H1 (cell line): ENCODE measurements at regions of chr14 and their contacts with region 1.

Region 1: DNA sequence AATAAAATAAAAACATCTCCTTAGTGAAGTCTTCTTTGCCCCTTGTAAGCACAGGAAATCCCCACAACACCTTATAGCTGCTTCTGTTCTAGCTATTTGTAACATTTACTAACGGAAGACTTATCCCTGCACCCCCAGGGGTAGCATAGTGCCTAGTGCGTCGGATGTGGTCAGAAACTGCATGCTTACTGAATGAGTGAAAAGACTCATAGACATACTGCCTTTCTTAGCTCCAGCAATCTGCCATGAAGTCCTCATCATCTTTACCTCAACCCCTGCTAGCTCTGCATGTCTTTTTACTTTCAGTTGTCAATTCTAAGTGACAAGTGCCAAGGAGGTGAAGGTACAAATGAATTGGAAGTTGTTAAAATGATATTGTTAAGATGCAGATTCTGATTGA is 12.9 kb downstream of the RIOX1 start:
- DNase-seq: no peak
- H3K4me3 ChIP-seq: no peak overlapping the region
- H3K27ac ChIP-seq: no peak overlapping the region
- H3K4me1 ChIP-seq: peaks cover 0 to 12% (median 2%) of the 10 kb centered on the region in 4 experiments; a peak in 4 of 7 replicates
- H3K27me3 ChIP-seq: no peaks in the 10 kb centered on the region
- CTCF ChIP-seq: no peak
- EP300 ChIP-seq: no peak
- POLR2A ChIP-seq: no peak
- RAD21 ChIP-seq: no peak

Region 2: DNA sequence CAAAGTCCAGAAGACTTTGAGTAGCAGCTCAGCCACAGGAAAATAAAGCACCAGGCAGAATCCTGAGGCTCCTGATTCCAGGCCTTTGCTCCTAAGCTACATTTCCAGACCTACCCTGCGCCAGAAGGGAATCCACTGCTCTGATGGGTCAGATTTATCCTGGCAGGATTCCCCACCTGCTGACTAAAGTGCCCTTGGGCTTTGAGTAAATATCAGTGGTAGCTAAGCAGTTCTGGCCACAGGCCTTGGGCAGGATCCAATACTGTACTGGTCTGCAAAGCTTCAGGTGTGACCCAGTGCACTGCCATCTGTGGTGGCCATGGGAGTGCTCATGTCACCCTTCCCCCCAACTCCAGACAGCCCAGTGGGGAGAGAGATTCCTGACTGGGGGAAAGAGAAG is 22.9 kb after region 1 on chr14:
- CTCF ChIA-PET with region 1: interaction called, 150 read pairs
- POLR2A ChIA-PET with region 1: no interaction called
- DNase-seq: no peak
- H3K4me3 ChIP-seq: no peak overlapping the region
- H3K27ac ChIP-seq: no peak overlapping the region; the same call in 1 of the 2 replicates
- H3K4me1 ChIP-seq: peaks cover 0 to 2% (median 2%) of the 10 kb centered on the region in 4 experiments; a peak in 2 of 7 replicates
- H3K27me3 ChIP-seq: no peaks in the 10 kb centered on the region
- CTCF ChIP-seq: no peak
- EP300 ChIP-seq: no peak
- POLR2A ChIP-seq: no peak
- RAD21 ChIP-seq: no peak

Region 3: GRCh38 chr14:73633116-73634010 is 129.7 kb after region 1 on chr14:
- CTCF ChIA-PET with region 1: interaction called, 52 read pairs
- POLR2A ChIA-PET with region 1: no interaction called
- DNase-seq: peak in 1 of 2 experiments; percentile 82
- H3K4me3 ChIP-seq: peak overlapping the region; percentile 31 to 65 (median 58)
- H3K27ac ChIP-seq: no peak overlapping the region; the same call in 1 of the 2 replicates
- H3K4me1 ChIP-seq: peaks cover 0 to 5% (median 1%) of the 10 kb centered on the region in 4 experiments; a peak in 4 of 7 replicates
- H3K27me3 ChIP-seq: no peaks in the 10 kb centered on the region
- CTCF ChIP-seq: peak; percentile 64 to 82 (median 80)
- EP300 ChIP-seq: no peak
- POLR2A ChIP-seq: no peak
- RAD21 ChIP-seq: peak; percentile 81 to 84